ENCODE measurements at regions of chr7 and their contacts with region 1.

Region 1: GRCh38 chr7:40977535-40977934 is 725.4 kb downstream of the INHBA start:
- DNase-seq: peak; percentile 54 to 100
- H3K4me3 ChIP-seq: no peak overlapping the region
- H3K27ac ChIP-seq: peak overlapping the region; percentile 88
- H3K4me1 ChIP-seq: peaks cover 36% of the 10 kb centered on the region
- H3K27me3 ChIP-seq: no peaks in the 10 kb centered on the region
- CTCF ChIP-seq: no peak

Region 2: GRCh38 chr7:40733578-40733977 is 244.0 kb before region 1 on chr7:
- CTCF ChIA-PET with region 1: no interaction called
- POLR2A ChIA-PET with region 1: no interaction called
- intact Hi-C with region 1: loop called (anchors 1 kb)
- DNase-seq: peak; percentile 40 to 92
- H3K4me3 ChIP-seq: no peak overlapping the region
- H3K27ac ChIP-seq: peak overlapping the region; percentile 36
- H3K4me1 ChIP-seq: peaks cover 26% of the 10 kb centered on the region
- H3K27me3 ChIP-seq: no peaks in the 10 kb centered on the region
- CTCF ChIP-seq: no peak

Region 3: GRCh38 chr7:41003031-41003925 is 25.7 kb after region 1 on chr7:
- CTCF ChIA-PET with region 1: no interaction called
- POLR2A ChIA-PET with region 1: interaction called, 4 read pairs
- intact Hi-C with region 1: loop called (anchors 1 kb)
- DNase-seq: peak; percentile 59 to 90
- H3K4me3 ChIP-seq: no peak overlapping the region
- H3K27ac ChIP-seq: peak overlapping the region; percentile 10
- H3K4me1 ChIP-seq: peaks cover 54% of the 10 kb centered on the region
- H3K27me3 ChIP-seq: no peaks in the 10 kb centered on the region
- CTCF ChIP-seq: peak; percentile 95

Region 4: DNA sequence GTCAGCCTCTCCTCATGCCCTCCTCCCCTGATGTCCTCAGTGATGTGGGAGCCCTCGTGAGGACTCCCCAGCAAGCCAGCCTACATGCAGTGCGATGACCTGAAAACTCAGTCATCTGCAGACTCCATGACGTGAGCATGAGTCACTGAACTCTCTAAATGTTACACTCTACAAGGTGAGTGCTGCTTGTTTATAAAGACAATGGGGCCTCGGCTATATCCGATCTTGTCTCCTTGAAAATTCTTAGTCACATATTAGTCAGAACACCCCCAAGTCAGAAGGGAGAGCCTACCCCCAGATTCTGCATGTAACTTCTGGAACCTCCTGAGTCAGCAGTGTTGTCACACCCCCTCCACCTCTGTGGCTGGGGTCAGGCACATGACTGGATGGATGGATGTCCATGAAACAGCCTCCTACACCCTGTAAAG is 51.6 kb after region 1 on chr7:
- CTCF ChIA-PET with region 1: no interaction called
- POLR2A ChIA-PET with region 1: no interaction called
- intact Hi-C with region 1: loop called (anchors 1 kb)
- DNase-seq: peak; percentile 74 to 84
- H3K4me3 ChIP-seq: no peak overlapping the region
- H3K27ac ChIP-seq: peak overlapping the region; percentile 39
- H3K4me1 ChIP-seq: peaks cover 22% of the 10 kb centered on the region
- H3K27me3 ChIP-seq: no peaks in the 10 kb centered on the region
- CTCF ChIP-seq: no peak

Region 5: GRCh38 chr7:41148521-41148951 is 171.0 kb after region 1 on chr7:
- CTCF ChIA-PET with region 1: no interaction called
- POLR2A ChIA-PET with region 1: interaction called, 4 read pairs
- intact Hi-C with region 1: loop called (anchors 1 kb)
- DNase-seq: peak; percentile 34 to 100
- H3K4me3 ChIP-seq: no peak overlapping the region; the same call in 1 of the 2 replicates
- H3K27ac ChIP-seq: peak overlapping the region; percentile 66
- H3K4me1 ChIP-seq: peaks cover 26% of the 10 kb centered on the region
- H3K27me3 ChIP-seq: no peaks in the 10 kb centered on the region
- CTCF ChIP-seq: no peak

Region 6: DNA sequence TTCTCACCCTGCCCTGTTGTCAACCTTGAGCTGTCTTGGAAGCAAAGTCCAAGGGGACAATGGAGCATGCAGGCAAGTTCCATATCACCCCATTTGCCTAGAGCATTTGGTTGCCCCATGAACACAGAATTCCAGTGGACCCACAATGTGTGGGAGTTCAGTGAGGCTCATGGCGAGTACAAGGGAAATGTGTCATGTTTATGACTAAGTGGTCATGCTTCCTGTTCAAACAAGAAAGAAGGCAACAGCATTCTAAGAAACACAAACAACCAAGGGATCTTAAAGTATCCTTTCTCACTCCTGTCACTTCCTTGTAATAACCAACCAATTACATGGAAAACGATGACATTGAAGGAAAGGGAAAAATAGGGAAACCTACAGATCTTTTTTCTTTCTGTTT is 212.3 kb after region 1 on chr7:
- CTCF ChIA-PET with region 1: no interaction called
- POLR2A ChIA-PET with region 1: no interaction called
- intact Hi-C with region 1: loop called (anchors 2 kb)
- DNase-seq: peak; percentile 61 to 99
- H3K4me3 ChIP-seq: no peak overlapping the region
- H3K27ac ChIP-seq: peak overlapping the region; percentile 93
- H3K4me1 ChIP-seq: peaks cover 46% of the 10 kb centered on the region
- H3K27me3 ChIP-seq: no peaks in the 10 kb centered on the region
- CTCF ChIP-seq: no peak

Region 7: GRCh38 chr7:41425926-41426325 is 448.4 kb after region 1 on chr7:
- CTCF ChIA-PET with region 1: no interaction called
- POLR2A ChIA-PET with region 1: no interaction called
- intact Hi-C with region 1: no loop called
- DNase-seq: peak in 1 of 2 experiments; percentile 69
- H3K4me3 ChIP-seq: no peak overlapping the region
- H3K27ac ChIP-seq: peak overlapping the region; percentile 4; the same call in 1 of the 2 replicates
- H3K4me1 ChIP-seq: peaks cover 8% of the 10 kb centered on the region
- H3K27me3 ChIP-seq: no peaks in the 10 kb centered on the region
- CTCF ChIP-seq: no peak

Region 8: GRCh38 chr7:41696314-41696916 is 718.9 kb after region 1 on chr7:
- CTCF ChIA-PET with region 1: no interaction called
- POLR2A ChIA-PET with region 1: no interaction called
- intact Hi-C with region 1: loop called (anchors 1 kb)
- DNase-seq: peak; percentile 68 to 80
- H3K4me3 ChIP-seq: peak overlapping the region; percentile 19; the same call in 1 of the 2 replicates
- H3K27ac ChIP-seq: no peak overlapping the region
- H3K4me1 ChIP-seq: peaks cover 24% of the 10 kb centered on the region
- H3K27me3 ChIP-seq: no peaks in the 10 kb centered on the region
- CTCF ChIP-seq: peak; percentile 75

Measured in PC-9 (cell line).